Prostate gland (tissue), 2 donors: ENCODE measurements at regions of chr3 and their contacts with region 1.

Region 1: GRCh38 chr3:122356415-122356814 is 26.6 kb downstream of the MIX23 start:
- DNase-seq: peak; percentile 51
- H3K4me3 ChIP-seq: no peak overlapping the region
- H3K27ac ChIP-seq: no peak overlapping the region
- H3K4me1 ChIP-seq: no peaks in the 10 kb centered on the region
- H3K27me3 ChIP-seq: no peaks in the 10 kb centered on the region
- CTCF ChIP-seq: peak in 3 of 4 experiments; percentile 53 to 63 (median 55)
- POLR2A ChIP-seq: no peak

Region 2: GRCh38 chr3:122101646-122102045 is 254.8 kb before region 1 on chr3:
- intact Hi-C with region 1: loop called (anchors 5 kb)
- DNase-seq: peak; percentile 38
- H3K4me3 ChIP-seq: no peak overlapping the region
- H3K27ac ChIP-seq: no peak overlapping the region
- H3K4me1 ChIP-seq: no peaks in the 10 kb centered on the region
- H3K27me3 ChIP-seq: no peaks in the 10 kb centered on the region
- CTCF ChIP-seq: peak in 3 of 4 experiments; percentile 39 to 68 (median 60)
- POLR2A ChIP-seq: no peak

Region 3: GRCh38 chr3:122186372-122186771 is 170.0 kb before region 1 on chr3:
- intact Hi-C with region 1: no loop called
- DNase-seq: no peak
- H3K4me3 ChIP-seq: no peak overlapping the region
- H3K27ac ChIP-seq: no peak overlapping the region
- H3K4me1 ChIP-seq: no peaks in the 10 kb centered on the region
- H3K27me3 ChIP-seq: peaks cover 11% of the 10 kb centered on the region
- CTCF ChIP-seq: no peak
- POLR2A ChIP-seq: no peak

Region 4: GRCh38 chr3:122233101-122233952 is 123.1 kb before region 1 on chr3:
- intact Hi-C with region 1: no loop called
- DNase-seq: no peak
- H3K4me3 ChIP-seq: no peak overlapping the region
- H3K27ac ChIP-seq: no peak overlapping the region
- H3K4me1 ChIP-seq: no peaks in the 10 kb centered on the region
- H3K27me3 ChIP-seq: no peaks in the 10 kb centered on the region
- CTCF ChIP-seq: no peak
- POLR2A ChIP-seq: no peak

Region 5: GRCh38 chr3:122268257-122269024 is 88.0 kb before region 1 on chr3:
- intact Hi-C with region 1: loop called (anchors 10 kb)
- DNase-seq: no peak
- H3K4me3 ChIP-seq: no peak overlapping the region
- H3K27ac ChIP-seq: no peak overlapping the region
- H3K4me1 ChIP-seq: no peaks in the 10 kb centered on the region
- H3K27me3 ChIP-seq: no peaks in the 10 kb centered on the region
- CTCF ChIP-seq: no peak
- POLR2A ChIP-seq: no peak

Region 6: DNA sequence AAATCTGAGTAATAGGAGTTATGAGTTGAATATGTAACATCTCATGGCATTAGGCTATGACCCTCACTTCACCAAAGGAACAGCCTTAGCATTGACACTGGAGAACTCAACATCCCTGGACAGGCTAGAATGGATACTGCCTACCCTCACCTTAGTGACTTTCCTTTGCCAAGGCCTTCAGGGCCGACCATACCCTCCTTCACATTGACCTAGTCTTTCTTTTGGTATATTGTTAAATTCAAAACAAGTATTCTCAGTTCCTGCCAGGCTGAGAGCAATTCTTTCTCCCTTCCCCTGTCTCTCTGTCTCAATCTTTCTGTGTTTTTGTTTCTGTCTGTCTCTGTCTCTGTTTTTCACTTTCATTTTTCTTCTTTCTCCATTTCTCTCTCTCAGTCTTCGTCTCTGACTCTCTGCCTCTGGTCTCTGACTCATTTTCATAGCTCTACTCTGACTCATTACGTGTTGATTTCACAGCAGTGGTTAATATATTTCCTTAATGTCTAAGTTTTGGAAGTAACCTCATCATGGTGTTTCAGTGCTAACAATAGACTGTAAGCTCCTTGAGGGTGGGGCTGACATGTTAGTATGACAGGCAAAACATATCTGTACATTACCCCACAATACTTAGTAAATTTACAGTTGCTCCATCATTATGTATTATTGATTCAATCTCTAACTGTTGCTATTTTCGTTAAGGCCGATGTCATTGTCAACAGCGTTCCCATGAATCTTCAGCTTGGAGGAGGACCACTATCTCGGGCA is 253.6 kb after region 1 on chr3:
- intact Hi-C with region 1: no loop called
- DNase-seq: no peak
- H3K4me3 ChIP-seq: no peak overlapping the region
- H3K27ac ChIP-seq: no peak overlapping the region
- H3K4me1 ChIP-seq: no peaks in the 10 kb centered on the region
- H3K27me3 ChIP-seq: no peaks in the 10 kb centered on the region
- CTCF ChIP-seq: no peak
- POLR2A ChIP-seq: no peak